Activated CD4-positive, alpha-beta memory T cell treated with anti-CD3 and anti-CD28 coated beads for 36 hours (primary cell): ENCODE measurements at regions of chr2 and their contacts with region 1.

Region 1: GRCh38 chr2:237434866-237435311 is 20.9 kb upstream of the COL6A3 start:
- DNase-seq: peak; percentile 94
- H3K4me3 Mint-ChIP-seq: peak overlapping the region; percentile 80
- H3K27ac Mint-ChIP-seq: peak overlapping the region; percentile 96
- H3K4me1 Mint-ChIP-seq: peaks cover 96% of the 10 kb centered on the region
- H3K27me3 Mint-ChIP-seq: no peaks in the 10 kb centered on the region

Region 2: DNA sequence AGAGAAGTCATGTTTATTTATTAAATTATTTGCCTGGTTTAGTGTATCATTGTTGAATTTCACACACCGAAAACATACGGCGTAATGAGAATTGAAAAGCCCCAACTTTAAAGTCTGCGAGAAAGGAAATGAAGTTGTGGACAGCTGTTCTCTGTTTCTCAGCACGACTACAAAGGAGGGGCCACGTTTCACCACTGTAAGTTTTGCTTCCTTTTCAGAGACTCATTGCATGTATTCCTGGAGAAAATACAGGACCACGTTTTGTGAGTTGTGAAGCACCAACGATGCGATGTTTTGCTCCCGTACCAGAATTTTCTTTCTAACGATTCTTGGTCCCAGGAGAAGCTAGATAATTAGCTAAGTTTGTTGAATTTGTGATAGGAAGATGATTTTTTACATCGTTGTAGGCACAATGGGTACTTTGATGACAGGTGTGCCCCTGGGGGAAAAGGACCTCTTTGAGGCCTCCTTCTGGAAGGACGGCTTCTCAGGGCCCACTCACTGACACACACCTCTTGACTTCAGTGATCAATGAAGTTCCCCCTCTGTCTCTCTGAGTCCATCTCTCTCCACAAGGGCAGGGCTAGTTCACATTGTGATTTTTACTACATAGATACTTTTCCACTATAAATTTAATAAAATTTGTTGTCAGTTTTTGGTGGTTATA is 888.9 kb before region 1 on chr2:
- CTCF ChIA-PET with region 1: no interaction called
- POLR2A ChIA-PET with region 1: no interaction called
- intact Hi-C with region 1: loop called (anchors 5 kb)
- DNase-seq: peak; percentile 44
- H3K4me3 Mint-ChIP-seq: peak overlapping the region; percentile 65
- H3K27ac Mint-ChIP-seq: peak overlapping the region; percentile 81
- H3K4me1 Mint-ChIP-seq: peaks cover 81% of the 10 kb centered on the region
- H3K27me3 Mint-ChIP-seq: no peaks in the 10 kb centered on the region

Region 3: DNA sequence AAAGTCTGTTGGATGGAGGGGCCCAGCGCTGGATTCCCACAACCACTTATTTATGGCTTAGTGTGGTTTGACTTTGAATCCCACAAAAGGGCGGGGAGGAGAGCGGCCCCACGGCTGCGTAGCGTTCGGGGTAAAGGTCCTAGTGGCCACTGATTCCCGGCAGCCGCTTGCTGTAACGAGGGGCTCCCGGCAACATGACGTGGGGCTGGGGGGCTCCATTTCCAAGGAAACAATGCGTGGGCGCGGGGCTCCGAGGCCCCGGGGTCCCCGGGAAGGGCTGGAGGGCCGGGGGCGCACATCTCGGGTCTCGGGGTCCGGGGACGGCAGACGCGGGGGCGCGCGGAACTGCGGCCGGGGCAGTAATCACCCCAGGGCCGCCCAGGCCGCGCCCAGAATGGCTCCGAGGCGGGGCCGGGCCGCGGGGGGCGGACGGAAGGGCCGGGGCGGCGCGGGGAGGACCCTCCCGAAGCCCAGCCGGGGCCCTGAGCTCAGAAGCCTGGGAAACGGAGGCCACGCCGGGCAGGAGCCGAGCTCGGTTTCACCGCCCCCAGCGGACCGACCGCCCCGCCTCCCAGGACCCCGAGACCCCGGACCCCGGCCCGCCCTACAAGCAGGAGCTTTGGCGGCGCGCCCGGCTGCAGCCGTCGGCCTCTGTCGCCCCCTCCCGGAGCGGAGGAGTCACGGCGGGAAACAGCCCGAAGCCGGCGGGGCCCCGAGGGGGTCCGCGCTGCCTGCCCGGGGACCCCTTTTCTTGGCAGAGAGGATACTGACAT is 40.2 kb after region 1 on chr2:
- CTCF ChIA-PET with region 1: interaction called, 38 read pairs
- POLR2A ChIA-PET with region 1: interaction called, 4 read pairs
- intact Hi-C with region 1: loop called (anchors 2 kb)
- DNase-seq: peak; percentile 79
- H3K4me3 Mint-ChIP-seq: peak overlapping the region; percentile 68
- H3K27ac Mint-ChIP-seq: peak overlapping the region; percentile 78
- H3K4me1 Mint-ChIP-seq: peaks cover 10% of the 10 kb centered on the region
- H3K27me3 Mint-ChIP-seq: peaks cover 18% of the 10 kb centered on the region

Region 4: DNA sequence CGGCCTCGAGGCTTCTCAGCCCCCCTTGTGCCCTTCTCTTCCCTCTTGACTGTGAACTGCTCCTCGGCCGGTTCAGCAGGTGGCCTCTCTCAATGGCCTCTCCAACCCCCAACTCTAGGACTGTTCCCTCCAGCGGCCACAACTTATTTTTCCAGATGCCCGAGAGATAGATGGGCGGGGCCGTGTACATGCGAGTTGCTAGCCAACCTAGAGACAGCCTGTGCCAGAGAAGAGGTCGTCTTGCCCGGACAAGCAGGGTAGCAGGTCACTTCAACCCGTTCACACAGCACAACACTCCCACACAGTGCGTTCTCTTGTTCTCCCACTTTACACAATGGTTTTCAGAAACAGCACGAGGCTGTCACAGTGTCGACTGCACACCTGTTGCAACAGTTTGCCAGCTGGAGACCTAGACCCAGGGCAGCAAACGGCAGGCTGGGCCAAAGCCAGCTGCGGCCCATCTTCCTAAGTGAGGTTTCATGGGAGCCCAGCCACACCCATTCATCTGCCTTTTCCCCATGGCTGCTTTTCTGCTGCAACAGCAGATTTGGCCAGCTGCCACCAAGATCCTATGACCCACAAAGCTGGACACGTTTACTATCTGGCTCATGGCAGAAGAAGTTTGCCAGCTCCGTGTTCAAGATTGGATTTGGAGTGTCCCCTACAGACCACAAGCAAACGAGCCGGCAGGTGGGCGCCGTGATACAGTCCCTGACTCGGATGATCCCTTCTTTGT is 124.2 kb after region 1 on chr2:
- CTCF ChIA-PET with region 1: no interaction called
- POLR2A ChIA-PET with region 1: no interaction called
- intact Hi-C with region 1: loop called (anchors 5 kb)
- DNase-seq: no peak
- H3K4me3 Mint-ChIP-seq: no peak overlapping the region
- H3K27ac Mint-ChIP-seq: no peak overlapping the region
- H3K4me1 Mint-ChIP-seq: peaks cover 13% of the 10 kb centered on the region
- H3K27me3 Mint-ChIP-seq: peaks cover 16% of the 10 kb centered on the region

Region 5: GRCh38 chr2:237818066-237818473 is 383.2 kb after region 1 on chr2:
- CTCF ChIA-PET with region 1: no interaction called
- POLR2A ChIA-PET with region 1: no interaction called
- intact Hi-C with region 1: loop called (anchors 10 kb)
- DNase-seq: no peak
- H3K4me3 Mint-ChIP-seq: no peak overlapping the region
- H3K27ac Mint-ChIP-seq: no peak overlapping the region
- H3K4me1 Mint-ChIP-seq: peaks cover 33% of the 10 kb centered on the region
- H3K27me3 Mint-ChIP-seq: no peaks in the 10 kb centered on the region